ENCODE measurements at regions of chr20 and their contacts with region 1.

Region 1: DNA sequence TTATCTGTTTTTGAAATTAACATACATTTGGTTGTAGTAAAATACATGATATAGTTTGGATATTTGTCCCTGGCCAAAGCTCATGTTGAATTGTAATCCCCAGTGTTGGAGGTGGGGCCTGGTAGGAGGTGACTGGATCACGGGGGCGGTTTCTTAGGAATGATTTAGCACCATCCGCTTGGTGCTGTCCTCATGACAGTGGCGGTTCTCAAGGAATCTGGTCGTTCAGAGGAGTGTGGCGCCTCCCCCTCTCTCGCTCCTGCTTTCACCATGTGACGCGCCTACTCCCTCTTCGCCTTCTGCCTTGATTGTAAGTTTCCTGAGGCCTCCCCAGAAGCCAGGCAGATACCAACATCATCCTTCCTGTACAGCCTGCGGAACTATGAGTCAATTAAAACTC is 29.0 kb downstream of the CTCFL start:
- DNase-seq: no peak
- H3K4me3 ChIP-seq: no peak overlapping the region
- H3K27ac ChIP-seq: peak overlapping the region in 3 of 4 donors; percentile 72 to 74 (median 73)
- H3K4me1 ChIP-seq: peaks cover 14 to 40% (median 32%) of the 10 kb centered on the region in 4 donors
- H3K27me3 ChIP-seq: no peaks in the 10 kb centered on the region
- CTCF ChIP-seq: no peak
- EP300 ChIP-seq: no peak
- POLR2A ChIP-seq: no peak

Region 2: GRCh38 chr20:57383447-57384347 is 112.3 kb before region 1 on chr20:
- intact Hi-C with region 1: loop called (anchors 1 kb)
- DNase-seq: no peak
- H3K4me3 ChIP-seq: no peak overlapping the region
- H3K27ac ChIP-seq: no peak overlapping the region
- H3K4me1 ChIP-seq: peaks cover 0 to 15% (median 7%) of the 10 kb centered on the region in 4 donors
- H3K27me3 ChIP-seq: no peaks in the 10 kb centered on the region
- CTCF ChIP-seq: no peak
- EP300 ChIP-seq: no peak
- POLR2A ChIP-seq: no peak

Region 3: DNA sequence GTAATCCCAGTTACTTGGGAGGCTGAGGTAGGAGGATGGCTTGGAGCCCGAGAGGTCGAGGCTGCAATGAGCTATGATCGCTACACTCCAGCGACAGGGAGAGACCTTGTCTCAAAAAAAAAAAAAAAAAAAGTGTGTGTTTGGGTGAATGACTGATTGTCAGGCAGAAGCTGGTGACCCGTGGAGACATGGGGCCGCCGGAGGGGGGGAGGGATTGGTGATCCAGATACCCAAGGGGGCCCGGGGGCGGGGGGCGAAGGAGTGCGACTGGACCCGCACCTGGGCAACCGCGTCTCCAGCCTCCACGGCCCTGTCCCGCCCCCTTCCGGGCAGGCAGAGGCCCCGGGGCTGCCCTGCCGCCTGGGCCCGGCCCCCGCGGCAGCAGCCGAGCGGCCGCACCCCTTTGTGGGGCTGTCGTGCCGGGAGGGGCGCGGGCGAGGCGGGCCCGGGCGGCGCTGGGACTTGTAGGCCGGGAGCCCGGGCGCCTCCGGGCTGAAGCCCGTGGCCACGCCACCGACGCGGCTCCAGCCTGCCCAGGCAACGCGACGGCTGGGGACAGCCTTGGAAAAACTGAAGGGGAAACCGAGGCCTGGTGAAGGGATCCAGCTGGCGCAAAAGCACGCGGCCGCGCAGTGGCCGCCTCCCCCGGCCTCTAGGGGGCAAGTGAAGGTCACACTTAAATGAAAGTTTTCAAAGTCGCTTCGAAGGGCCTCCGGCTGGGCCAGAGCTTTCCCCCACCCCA is 106.9 kb before region 1 on chr20:
- intact Hi-C with region 1: loop called (anchors 2 kb)
- DNase-seq: no peak
- H3K4me3 ChIP-seq: peak overlapping the region; percentile 46 to 59 (median 48)
- H3K27ac ChIP-seq: peak overlapping the region; percentile 82 to 94 (median 85)
- H3K4me1 ChIP-seq: peaks cover 41 to 54% (median 47%) of the 10 kb centered on the region in 4 donors
- H3K27me3 ChIP-seq: no peaks in the 10 kb centered on the region
- CTCF ChIP-seq: peak in 2 of 3 experiments; percentile 20 to 31
- EP300 ChIP-seq: no peak
- POLR2A ChIP-seq: peak; percentile 49

Region 4: GRCh38 chr20:58078741-58079522 is 582.9 kb after region 1 on chr20:
- intact Hi-C with region 1: no loop called
- DNase-seq: peak; percentile 74
- H3K4me3 ChIP-seq: no peak overlapping the region
- H3K27ac ChIP-seq: peak overlapping the region in 1 of 4 donors; percentile 17
- H3K4me1 ChIP-seq: peaks cover 0 to 15% (median 7%) of the 10 kb centered on the region in 4 donors
- H3K27me3 ChIP-seq: no peaks in the 10 kb centered on the region
- CTCF ChIP-seq: no peak
- EP300 ChIP-seq: no peak
- POLR2A ChIP-seq: no peak